ENCODE measurements at regions of chr16 and their contacts with region 1.

Region 1: GRCh38 chr16:69565671-69566239 is at the start of gene NFAT5:
- DNase-seq: peak; percentile 94
- ATAC-seq: peak; percentile 25
- H3K4me3 Mint-ChIP-seq: peak within 1 kb of the TSS; percentile 99
- H3K27ac Mint-ChIP-seq: peak within 1 kb of the TSS; percentile 99
- H3K4me1 Mint-ChIP-seq: peaks cover 54% of the 10 kb centered on the region
- H3K27me3 Mint-ChIP-seq: no peaks in the 10 kb centered on the region
- total RNA-seq, gene NFAT5: 29.6 to 37.9 TPM

Region 2: GRCh38 chr16:69132424-69133252 is 433.1 kb before region 1 on chr16 and contains the starts of genes CHTF8 and UTP4:
- CTCF ChIA-PET with region 1: no interaction called
- POLR2A ChIA-PET with region 1: no interaction called
- intact Hi-C with region 1: loop called in 1 of 2 experiments (anchors 2 kb)
- DNase-seq: peak; percentile 94
- ATAC-seq: peak; percentile 95
- H3K4me3 Mint-ChIP-seq: peak within 1 kb of the TSS; percentile 93
- H3K27ac Mint-ChIP-seq: peak within 1 kb of the TSS; percentile 93
- H3K4me1 Mint-ChIP-seq: peaks cover 59% of the 10 kb centered on the region
- H3K27me3 Mint-ChIP-seq: no peaks in the 10 kb centered on the region
- total RNA-seq, gene CHTF8: 153 to 194 TPM
- total RNA-seq, gene UTP4: 102 to 119 TPM

Region 3: DNA sequence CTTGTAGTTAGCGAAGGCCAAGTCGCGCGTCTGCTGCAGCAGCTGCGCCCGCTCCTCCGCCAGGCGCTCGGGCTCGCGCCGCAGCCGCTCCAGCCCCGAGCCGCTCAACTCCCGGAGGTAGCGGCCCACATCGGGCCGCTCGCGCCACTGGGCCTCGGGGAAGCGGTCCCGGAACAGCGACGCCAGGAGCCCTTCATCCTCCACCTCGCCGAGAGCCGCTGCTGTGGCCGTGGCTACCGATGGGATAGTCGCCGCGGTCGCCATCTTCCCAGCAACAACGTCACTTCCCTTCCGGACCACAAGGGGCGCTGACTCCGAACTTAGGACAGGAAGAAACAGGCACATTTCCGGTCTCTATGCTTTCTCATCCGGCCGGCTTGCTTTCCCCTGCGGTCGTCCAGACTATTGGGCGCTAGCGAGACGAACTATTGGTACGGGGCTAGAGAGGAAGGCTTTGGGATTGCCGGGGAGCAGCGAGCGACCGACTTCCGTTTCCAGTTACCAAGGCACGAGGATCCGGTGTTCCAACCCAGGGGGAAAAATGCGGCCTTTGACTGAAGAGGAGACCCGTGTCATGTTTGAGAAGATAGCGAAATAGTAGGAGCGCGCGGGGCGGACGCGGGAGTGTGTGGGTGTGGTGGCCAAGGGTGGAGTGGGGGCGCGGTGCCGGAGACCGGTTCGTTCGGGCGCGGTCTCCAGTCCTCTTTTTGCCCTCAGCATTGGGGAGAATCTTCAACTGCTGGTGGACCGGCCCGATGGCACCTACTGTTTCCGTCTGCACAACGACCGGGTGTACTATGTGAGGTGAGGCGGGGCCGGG is 226.3 kb before region 1 on chr16 and contains the starts of genes COG8 and NIP7:
- CTCF ChIA-PET with region 1: no interaction called
- POLR2A ChIA-PET with region 1: no interaction called
- intact Hi-C with region 1: loop called (anchors 1 to 10 kb)
- DNase-seq: peak; percentile 95
- ATAC-seq: peak; percentile 89
- H3K4me3 Mint-ChIP-seq: peak within 1 kb of the TSS; percentile 96
- H3K27ac Mint-ChIP-seq: peak within 1 kb of the TSS; percentile 98
- H3K4me1 Mint-ChIP-seq: peaks cover 37% of the 10 kb centered on the region
- H3K27me3 Mint-ChIP-seq: no peaks in the 10 kb centered on the region
- total RNA-seq, gene COG8: 30.0 to 30.3 TPM
- total RNA-seq, gene NIP7: 39.1 to 41.3 TPM

Region 4: GRCh38 chr16:69443927-69444631 is 121.7 kb before region 1 on chr16:
- CTCF ChIA-PET with region 1: no interaction called
- POLR2A ChIA-PET with region 1: no interaction called
- intact Hi-C with region 1: loop called in 1 of 2 experiments (anchors 2 kb)
- DNase-seq: peak; percentile 47
- ATAC-seq: peak; percentile 71
- H3K4me3 Mint-ChIP-seq: peak overlapping the region; percentile 65
- H3K27ac Mint-ChIP-seq: peak overlapping the region; percentile 94
- H3K4me1 Mint-ChIP-seq: peaks cover 36% of the 10 kb centered on the region
- H3K27me3 Mint-ChIP-seq: no peaks in the 10 kb centered on the region

Region 5: DNA sequence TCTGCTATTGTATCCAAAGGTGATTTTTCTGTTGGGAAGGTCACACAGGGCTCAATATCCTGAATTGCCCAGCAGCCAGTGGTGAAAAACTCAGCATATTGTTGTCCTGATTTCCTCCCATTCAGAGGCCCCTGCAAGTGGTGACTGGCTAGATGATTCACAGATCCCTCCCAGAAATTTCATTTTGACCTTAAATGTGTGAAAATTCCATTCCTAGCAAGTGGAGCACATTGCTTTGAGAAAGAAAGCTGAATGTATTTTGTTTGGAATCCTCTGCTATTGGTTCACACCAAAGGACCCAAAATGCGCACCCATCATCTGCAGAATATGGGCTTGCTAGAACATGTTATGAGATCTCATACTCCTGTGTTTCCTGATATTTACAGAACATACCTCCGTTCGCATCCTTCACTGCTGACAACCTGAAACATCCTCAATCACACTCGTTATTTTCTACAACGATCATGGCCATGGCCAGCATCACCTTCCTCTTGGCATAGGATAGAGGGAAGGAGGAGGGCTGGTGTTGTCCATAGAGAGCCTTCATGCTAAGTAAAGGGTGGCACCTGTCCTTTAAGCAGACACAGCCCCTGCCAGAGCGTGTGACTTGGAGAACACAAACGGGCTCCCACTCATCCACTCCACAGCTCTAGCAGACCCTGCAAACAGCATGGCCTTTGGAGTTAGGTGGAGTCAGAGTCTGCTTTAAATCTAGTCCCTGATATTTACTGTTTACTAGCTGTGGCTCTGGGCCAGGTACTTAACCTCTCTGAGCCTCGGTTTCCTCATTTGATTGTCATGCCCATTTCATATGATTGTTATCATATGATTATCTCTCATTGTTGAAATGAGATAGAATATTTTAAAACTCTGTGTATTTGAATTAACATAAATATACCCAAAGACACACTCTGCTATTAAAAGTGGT is 30.4 kb before region 1 on chr16:
- CTCF ChIA-PET with region 1: interaction called, 7 read pairs
- POLR2A ChIA-PET with region 1: interaction called, 6 read pairs
- intact Hi-C with region 1: loop called (anchors 1 kb)
- DNase-seq: no peak
- ATAC-seq: no peak
- H3K4me3 Mint-ChIP-seq: no peak overlapping the region
- H3K27ac Mint-ChIP-seq: no peak overlapping the region
- H3K4me1 Mint-ChIP-seq: peaks cover 21% of the 10 kb centered on the region
- H3K27me3 Mint-ChIP-seq: peaks cover 1% of the 10 kb centered on the region

Region 6: GRCh38 chr16:69761983-69762813 is 196.4 kb after region 1 on chr16 and contains the start of gene WWP2:
- CTCF ChIA-PET with region 1: no interaction called
- POLR2A ChIA-PET with region 1: interaction called, 3 read pairs
- intact Hi-C with region 1: loop called in 1 of 2 experiments (anchors 2 kb)
- DNase-seq: peak; percentile 86
- ATAC-seq: peak; percentile 76
- H3K4me3 Mint-ChIP-seq: peak within 1 kb of the TSS; percentile 91
- H3K27ac Mint-ChIP-seq: peak within 1 kb of the TSS; percentile 98
- H3K4me1 Mint-ChIP-seq: peaks cover 35% of the 10 kb centered on the region
- H3K27me3 Mint-ChIP-seq: no peaks in the 10 kb centered on the region
- total RNA-seq, gene WWP2: 43.3 to 44.6 TPM